Activated CD4-positive, alpha-beta memory T cell treated with anti-CD3 and anti-CD28 coated beads, Interleukin-2, amount 10 ng/mL, durations not matched to agents 7 days and 5 days (primary cell): ENCODE measurements at regions of chr20 and their contacts with region 1.

Region 1: DNA sequence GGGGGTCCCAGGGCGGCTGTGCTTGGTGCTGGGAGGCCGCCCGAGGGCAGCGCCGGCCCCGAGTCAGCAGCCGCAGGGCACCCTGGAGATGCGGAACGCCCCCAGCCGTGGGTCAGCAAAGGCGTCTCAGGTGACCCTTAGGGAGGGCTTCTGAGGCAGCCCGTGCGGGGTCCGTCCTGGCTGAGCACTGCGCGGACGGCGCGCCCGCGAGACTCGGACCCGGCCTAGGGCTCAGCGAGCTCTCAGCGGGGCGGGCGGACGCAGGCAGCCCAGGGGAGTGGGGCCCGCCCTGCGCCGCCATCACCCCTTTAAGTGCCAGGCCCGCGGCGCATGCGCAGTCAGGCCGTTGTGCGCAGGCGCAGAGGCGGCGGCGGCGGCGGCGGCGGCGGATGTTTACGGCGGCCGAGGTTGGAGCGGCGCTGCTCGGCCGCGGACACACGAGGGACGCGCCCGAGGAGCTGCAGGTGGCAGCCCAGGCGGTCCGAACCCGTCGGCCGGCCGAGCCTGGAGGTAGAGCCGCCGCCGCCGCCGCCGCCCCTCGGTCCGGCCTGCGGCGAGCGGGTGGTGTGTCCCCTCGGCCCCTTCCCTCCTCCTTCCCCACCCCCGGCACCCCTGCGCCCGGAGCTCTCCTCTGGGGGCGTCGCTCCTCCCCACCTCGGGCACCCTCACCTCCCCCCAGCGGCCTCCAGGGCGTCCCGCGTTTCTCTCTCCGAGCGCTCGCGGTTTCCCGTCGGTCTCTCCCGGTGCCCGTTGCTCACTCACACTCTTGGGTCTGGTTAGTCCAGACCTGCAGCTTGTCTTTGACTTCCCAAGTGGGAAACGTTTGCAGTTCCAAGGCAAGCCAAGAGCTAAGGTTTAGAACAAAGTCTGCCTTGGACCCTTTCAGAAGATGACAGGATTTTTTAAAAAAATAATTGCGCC is at the start of gene PCMTD2:
- DNase-seq: peak; percentile 93
- H3K4me3 Mint-ChIP-seq: peak within 1 kb of the TSS; percentile 89
- H3K27ac Mint-ChIP-seq: peak within 1 kb of the TSS; percentile 88
- H3K4me1 Mint-ChIP-seq: peaks cover 43% of the 10 kb centered on the region
- H3K27me3 Mint-ChIP-seq: peaks cover 3% of the 10 kb centered on the region
- total RNA-seq, gene PCMTD2: 42.8 to 50.7 TPM

Region 2: GRCh38 chr20:64279826-64280459 is 24.3 kb after region 1 on chr20:
- CTCF ChIA-PET with region 1: interaction called, 45 read pairs
- POLR2A ChIA-PET with region 1: interaction called, 5 read pairs
- DNase-seq: no peak
- H3K4me3 Mint-ChIP-seq: no peak overlapping the region
- H3K27ac Mint-ChIP-seq: no peak overlapping the region
- H3K4me1 Mint-ChIP-seq: peaks cover 10% of the 10 kb centered on the region
- H3K27me3 Mint-ChIP-seq: peaks cover 5% of the 10 kb centered on the region